Right ventricle myocardium inferior (tissue), 1 donor: ENCODE measurements at regions of chr19 and their contacts with region 1.

Region 1: DNA sequence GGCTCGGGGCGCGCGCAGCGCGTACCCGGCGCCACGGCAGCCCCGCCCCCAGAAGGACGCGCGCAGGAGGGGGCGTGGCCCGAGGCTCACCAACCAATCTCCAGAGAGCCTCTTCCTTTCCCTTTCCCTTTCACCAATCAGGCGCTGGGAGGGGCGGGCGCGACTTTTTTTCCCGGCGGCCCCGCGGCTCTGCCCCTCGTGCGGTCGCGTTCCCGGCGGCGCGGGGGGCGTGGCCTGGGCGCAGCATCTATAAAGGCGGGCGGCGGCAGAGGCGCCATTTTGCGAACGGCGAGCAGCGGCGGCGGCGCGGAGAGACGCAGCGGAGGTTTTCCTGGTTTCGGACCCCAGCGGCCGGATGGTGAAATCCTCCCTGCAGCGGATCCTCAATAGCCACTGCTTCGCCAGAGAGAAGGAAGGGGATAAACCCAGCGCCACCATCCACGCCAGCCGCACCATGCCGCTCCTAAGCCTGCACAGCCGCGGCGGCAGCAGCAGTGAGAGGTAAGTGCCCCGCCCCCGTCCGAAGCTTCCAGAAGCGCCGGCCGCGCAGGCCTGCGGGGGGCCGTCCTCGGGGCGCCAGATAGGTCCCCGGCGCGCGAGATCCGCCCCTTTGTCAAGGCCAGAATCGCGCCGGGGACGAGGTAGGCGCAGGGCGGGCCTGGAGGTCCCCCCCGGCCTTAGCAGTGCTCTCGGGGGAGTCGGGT is 12.6 kb downstream of the PEAK3 start:
- DNase-seq: peak; percentile 99
- ATAC-seq: peak; percentile 91

Region 2: DNA sequence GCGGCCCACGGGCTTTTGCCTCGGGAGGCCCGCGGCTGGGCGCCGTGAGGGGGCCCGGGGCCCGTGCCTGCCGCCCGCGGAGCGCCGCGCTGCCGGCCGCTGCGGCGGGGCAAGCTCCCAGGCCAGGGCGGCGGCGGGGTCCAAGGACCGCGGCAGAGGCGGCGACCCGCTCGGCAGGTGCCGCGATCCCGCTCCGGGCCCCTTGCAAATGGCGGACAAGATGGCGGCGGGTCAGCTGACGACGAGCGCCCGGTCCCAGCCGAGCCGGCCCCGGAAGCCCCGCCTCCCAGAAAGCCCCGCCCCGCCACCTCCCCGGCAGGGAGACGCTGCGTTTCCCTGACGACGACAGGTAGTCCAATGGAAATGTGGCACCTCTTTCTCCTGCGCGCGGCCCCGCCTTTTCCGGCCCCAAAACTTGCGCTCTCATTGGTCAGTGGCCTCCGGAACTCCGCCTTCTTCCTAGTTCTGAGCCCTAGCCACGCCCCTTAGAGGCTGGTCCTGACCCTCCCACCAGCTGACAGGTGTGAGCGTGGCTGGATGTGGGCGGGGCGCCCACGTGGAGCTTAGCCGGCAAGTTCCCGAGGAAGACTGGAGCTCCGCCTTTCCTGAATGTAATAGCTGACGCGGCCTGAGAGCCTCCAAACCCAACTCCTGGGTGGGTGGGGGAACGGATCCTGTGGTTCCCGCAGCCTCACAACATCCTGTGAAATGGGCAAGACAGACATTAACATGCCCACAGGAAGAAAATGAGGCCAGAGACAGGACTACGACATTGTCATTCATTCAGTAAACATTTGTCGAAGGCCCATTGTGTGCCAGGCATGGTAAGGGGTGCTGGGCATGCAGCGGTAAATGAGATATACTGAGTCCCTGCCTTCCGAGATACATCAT is 117.8 kb before region 1 on chr19 and contains the start of gene AP3D1:
- intact Hi-C with region 1: loop called (anchors 1 kb)
- DNase-seq: peak; percentile 99
- ATAC-seq: peak; percentile 99
- total RNA-seq, gene AP3D1: 71.8 TPM

Region 3: GRCh38 chr19:2236314-2237050 is 32.9 kb before region 1 on chr19 and contains the starts of genes PLEKHJ1 and SF3A2:
- intact Hi-C with region 1: loop called (anchors 1 kb)
- DNase-seq: peak; percentile 98
- ATAC-seq: peak; percentile 94
- total RNA-seq, gene PLEKHJ1: 59.7 TPM
- total RNA-seq, gene SF3A2: 30.3 TPM

Region 4: DNA sequence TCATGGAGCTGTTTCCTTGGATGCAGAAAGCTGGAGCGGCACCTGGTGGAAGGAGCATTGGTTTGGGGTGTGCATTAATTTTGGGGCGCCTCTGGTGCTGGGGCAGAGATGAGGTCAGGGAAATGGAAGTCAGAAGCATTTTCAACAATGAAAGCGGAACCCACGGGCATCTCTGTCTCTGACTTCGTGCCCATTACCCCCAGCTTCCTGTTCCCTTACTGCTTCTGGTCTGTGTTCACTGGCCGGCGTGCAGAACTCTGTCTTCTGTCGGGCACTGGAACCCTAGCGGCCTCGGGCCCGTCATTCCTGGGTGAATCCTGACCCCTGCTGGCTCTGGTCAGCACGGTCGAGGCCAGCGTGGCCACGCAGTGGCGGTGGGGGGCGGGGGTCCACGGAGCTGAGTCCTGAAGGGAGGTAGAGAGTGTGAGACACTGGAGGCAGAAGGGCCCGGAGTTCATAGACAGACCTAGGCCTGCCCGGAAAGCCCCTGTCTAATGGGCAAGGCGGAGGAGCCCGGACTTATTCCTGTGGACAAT is 46.5 kb after region 1 on chr19:
- intact Hi-C with region 1: loop called (anchors 2 kb)
- DNase-seq: peak; percentile 94
- ATAC-seq: peak; percentile 91

Region 5: DNA sequence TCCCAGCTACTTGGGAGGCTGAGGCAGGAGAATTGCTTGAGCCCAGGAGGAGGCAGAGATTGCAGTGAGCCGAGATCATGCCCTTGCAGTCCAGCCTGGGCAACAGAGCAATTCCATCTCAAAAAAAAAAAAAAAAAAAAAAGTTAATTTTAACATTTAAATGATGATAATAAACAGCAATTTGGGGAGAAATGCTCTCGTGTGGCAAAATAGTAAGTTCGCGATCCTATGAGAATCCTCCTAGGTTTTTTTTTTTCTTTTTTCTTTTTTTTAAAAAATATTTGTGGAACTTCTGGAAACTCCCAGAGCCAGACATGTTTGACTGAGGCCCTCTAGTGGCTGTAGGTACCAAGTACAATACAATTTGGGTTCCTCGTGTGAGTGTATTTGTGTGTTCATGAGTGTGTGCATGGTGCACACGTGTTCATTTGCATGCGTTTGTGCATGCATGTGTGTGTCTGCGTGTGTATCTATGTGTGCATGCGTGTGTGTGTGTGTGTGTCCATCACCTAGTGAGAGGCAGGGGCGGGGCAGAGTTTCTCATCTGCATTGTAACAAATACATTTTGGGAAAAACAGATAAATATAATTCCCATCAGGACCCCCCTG is 121.8 kb after region 1 on chr19:
- intact Hi-C with region 1: loop called (anchors 2 kb)
- DNase-seq: no peak
- ATAC-seq: no peak

Region 6: GRCh38 chr19:2408247-2408646 is 138.9 kb after region 1 on chr19:
- intact Hi-C with region 1: no loop called
- DNase-seq: no peak
- ATAC-seq: no peak

Region 7: DNA sequence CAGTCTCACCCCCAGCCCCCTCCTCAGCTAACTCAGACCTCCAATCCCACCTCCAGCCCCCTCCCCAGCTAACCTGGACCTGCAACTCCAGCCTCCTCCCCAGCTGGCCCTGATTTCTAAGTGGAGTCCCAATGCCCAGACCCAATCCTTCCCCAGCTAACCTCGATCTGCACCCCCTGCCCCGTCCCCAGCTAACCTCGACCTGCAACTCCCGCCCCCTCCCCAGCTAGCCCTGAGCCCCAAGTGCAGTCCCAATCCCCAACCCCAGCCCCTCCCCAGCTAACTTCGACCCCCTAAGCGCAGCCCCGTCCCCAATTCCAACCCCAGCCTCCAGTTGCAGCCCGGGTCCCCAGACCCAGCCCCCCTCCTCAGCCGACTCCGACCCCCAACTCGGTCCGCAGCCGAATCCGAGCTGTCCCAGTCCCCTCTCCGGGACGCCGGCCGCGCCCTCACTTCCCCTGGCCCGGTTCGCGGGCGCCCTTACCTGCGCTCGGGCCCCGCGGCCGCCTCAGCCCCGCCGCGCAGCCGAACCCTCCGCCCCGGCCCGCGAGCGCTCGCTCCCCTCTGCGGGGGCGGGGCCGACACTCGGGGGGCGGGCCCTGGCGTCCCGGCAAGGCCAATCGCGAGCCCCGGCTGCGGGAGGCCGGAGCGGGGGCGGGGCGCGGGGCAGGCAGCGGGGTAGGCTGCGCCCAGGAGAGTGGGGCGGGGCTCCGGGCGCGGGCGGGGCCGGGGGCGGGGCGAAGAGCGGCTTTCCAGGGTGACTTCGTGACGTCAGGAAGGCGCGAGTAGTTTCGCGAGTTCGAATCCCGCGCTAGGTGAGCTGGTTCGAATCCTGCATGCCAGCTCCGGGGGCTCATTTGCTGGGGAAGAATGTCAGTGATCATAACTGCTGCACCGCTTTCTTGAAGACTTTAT is 433.0 kb after region 1 on chr19 and contains the start of gene GNG7:
- intact Hi-C with region 1: no loop called
- DNase-seq: peak; percentile 96
- ATAC-seq: peak; percentile 100
- total RNA-seq, gene GNG7: 26.7 TPM